Activated CD8-positive, alpha-beta T cell treated with anti-CD3 and anti-CD28 coated beads, Interleukin-2, amount 10 ng/mL, durations not matched to agents 7 days and 5 days (primary cell): ENCODE measurements at regions of chr19 and their contacts with region 1.

Region 1: GRCh38 chr19:6737284-6738046 is at the start of gene GPR108:
- DNase-seq: peak; percentile 100
- ATAC-seq: peak; percentile 81
- H3K4me3 Mint-ChIP-seq: peak within 1 kb of the TSS; percentile 98
- H3K27ac Mint-ChIP-seq: peak within 1 kb of the TSS; percentile 100
- H3K4me1 Mint-ChIP-seq: peaks cover 40% of the 10 kb centered on the region
- H3K27me3 Mint-ChIP-seq: no peaks in the 10 kb centered on the region
- total RNA-seq, gene GPR108: 76.7 to 85.6 TPM

Region 2: DNA sequence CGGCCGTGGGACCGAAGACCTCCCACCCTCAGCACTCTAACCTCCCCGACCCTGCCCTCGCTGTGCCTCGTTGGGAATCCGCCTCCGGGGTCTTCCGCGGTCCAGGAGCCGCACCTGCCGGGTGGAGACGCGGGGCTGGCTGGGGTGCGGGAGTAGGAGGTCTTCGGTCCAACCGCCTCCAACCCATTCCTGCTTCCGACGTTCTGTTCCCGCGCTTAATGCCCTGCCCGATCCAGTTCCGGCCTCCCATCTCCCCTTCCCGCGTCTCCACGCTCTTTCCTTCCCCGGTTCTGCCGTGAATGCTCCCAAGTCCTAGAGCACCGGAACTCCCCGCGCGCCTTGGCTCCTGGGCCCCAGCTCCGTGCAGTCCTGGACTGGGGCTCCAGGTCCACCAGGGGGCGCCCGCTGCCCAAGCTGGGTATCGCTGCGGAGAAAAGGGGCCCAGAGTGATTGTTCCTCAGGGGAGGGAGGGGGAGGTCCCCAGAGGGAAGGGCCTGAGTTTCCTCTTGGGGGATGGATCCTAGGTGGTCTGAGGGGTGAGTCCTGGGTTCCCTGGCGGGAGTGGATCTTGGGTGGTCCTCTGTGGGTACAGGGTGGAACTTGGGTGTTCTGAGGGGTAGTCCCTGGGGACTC is 220.7 kb before region 1 on chr19:
- CTCF ChIA-PET with region 1: interaction called, 22 read pairs
- POLR2A ChIA-PET with region 1: interaction called, 5 read pairs
- DNase-seq: peak; percentile 94
- ATAC-seq: peak; percentile 87
- H3K4me3 Mint-ChIP-seq: peak overlapping the region; percentile 93
- H3K27ac Mint-ChIP-seq: peak overlapping the region; percentile 93
- H3K4me1 Mint-ChIP-seq: peaks cover 32% of the 10 kb centered on the region
- H3K27me3 Mint-ChIP-seq: no peaks in the 10 kb centered on the region

Region 3: GRCh38 chr19:6632002-6632621 is 105.4 kb before region 1 on chr19:
- CTCF ChIA-PET with region 1: interaction called, 56 read pairs
- POLR2A ChIA-PET with region 1: no interaction called
- DNase-seq: peak; percentile 93
- ATAC-seq: peak; percentile 82
- H3K4me3 Mint-ChIP-seq: no peak overlapping the region
- H3K27ac Mint-ChIP-seq: no peak overlapping the region
- H3K4me1 Mint-ChIP-seq: peaks cover 40% of the 10 kb centered on the region
- H3K27me3 Mint-ChIP-seq: peaks cover 4% of the 10 kb centered on the region

Region 4: GRCh38 chr19:6668691-6669090 is 68.8 kb before region 1 on chr19:
- CTCF ChIA-PET with region 1: interaction called, 15 read pairs
- POLR2A ChIA-PET with region 1: interaction called, 4 read pairs
- DNase-seq: peak; percentile 49
- ATAC-seq: no peak
- H3K4me3 Mint-ChIP-seq: peak overlapping the region; percentile 99
- H3K27ac Mint-ChIP-seq: peak overlapping the region; percentile 91
- H3K4me1 Mint-ChIP-seq: peaks cover 36% of the 10 kb centered on the region
- H3K27me3 Mint-ChIP-seq: no peaks in the 10 kb centered on the region

Region 5: GRCh38 chr19:6694147-6694815 is 43.2 kb before region 1 on chr19:
- CTCF ChIA-PET with region 1: no interaction called
- POLR2A ChIA-PET with region 1: no interaction called
- DNase-seq: no peak
- ATAC-seq: peak; percentile 63
- H3K4me3 Mint-ChIP-seq: no peak overlapping the region
- H3K27ac Mint-ChIP-seq: no peak overlapping the region
- H3K4me1 Mint-ChIP-seq: peaks cover 15% of the 10 kb centered on the region
- H3K27me3 Mint-ChIP-seq: peaks cover 2% of the 10 kb centered on the region

Region 6: GRCh38 chr19:6767357-6768235 is 30.1 kb after region 1 on chr19 and contains the start of gene SH2D3A:
- CTCF ChIA-PET with region 1: interaction called, 32 read pairs
- POLR2A ChIA-PET with region 1: interaction called, 12 read pairs
- DNase-seq: peak; percentile 97
- ATAC-seq: peak; percentile 79
- H3K4me3 Mint-ChIP-seq: peak within 1 kb of the TSS; percentile 88
- H3K27ac Mint-ChIP-seq: peak within 1 kb of the TSS; percentile 91
- H3K4me1 Mint-ChIP-seq: peaks cover 60% of the 10 kb centered on the region
- H3K27me3 Mint-ChIP-seq: no peaks in the 10 kb centered on the region
- total RNA-seq, gene SH2D3A: 28.2 to 28.5 TPM

Region 7: DNA sequence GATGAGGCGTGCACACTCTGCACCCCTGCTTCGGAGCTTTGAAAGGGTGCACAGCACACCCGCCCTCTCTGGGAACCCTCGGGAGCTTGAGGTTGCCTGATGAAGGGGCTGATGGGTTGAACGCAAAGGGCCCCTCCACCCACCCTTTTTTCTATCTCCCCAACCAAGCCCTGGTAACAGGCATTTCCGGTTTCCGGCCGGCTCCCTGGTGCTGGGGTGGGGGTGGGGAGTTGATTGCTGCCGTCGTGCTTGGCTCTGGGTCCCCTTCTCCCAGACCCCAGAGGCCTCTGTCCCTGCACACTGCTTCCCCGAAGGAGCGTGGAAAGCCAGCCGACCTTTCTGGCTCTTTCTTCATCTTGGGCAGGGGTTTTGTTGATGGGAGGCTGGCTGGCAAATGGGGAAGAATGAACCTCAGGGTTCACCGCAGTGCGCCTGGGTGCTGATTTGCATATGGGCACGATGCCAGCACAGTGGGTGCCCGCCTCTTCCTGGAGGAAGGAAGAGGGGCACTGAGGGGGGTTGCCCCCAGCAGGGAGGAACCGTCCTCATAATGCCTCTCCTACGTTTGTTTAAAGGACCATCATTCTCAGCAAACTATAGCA is 64.1 kb after region 1 on chr19:
- CTCF ChIA-PET with region 1: interaction called, 16 read pairs
- POLR2A ChIA-PET with region 1: interaction called, 6 read pairs
- DNase-seq: peak; percentile 91
- ATAC-seq: peak; percentile 79
- H3K4me3 Mint-ChIP-seq: peak overlapping the region; percentile 84
- H3K27ac Mint-ChIP-seq: peak overlapping the region; percentile 97
- H3K4me1 Mint-ChIP-seq: peaks cover 60% of the 10 kb centered on the region
- H3K27me3 Mint-ChIP-seq: no peaks in the 10 kb centered on the region